Naive thymus-derived CD8-positive, alpha-beta T cell (primary cell): ENCODE measurements at regions of chr6 and their contacts with region 1.

Region 1: DNA sequence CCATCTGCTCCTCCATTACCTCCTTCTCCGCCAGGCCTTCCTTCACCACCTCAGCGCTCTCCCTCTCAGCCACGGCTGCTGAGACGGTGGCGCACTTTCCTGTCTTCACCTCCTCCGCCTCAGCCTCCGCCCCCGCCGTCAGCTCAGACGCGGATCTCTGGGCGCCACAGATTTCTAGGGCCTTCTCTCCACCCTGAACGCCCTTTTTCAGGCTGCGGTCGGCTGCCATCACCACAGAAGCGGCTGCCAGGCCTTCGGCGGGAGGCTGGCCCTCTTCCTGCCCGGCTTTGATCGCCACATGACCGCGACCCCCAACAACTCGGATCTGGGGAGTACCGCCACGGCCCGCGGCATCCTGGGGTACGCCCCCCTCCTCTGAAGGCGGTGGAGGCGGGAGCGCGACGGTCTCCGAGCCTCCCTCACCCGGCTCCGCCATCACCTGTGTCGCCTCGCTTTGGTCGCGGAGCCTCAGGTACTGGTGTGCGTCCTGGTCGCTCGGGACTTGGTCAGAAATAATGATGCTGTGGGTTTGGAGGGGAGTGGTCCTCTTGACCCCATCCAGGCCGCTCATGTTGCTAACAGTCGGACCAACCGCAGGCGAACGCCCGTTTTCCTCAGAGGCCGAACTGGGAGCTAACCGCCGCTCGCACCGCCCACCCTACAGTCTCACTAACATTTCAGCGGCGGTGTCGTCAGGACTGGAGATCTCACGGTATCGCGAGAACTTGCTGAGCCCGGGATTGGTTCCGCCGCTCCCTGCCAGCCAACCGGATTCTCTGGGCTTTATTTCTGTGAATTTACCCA is at the start of gene TSPYL1:
- DNase-seq: peak; percentile 84 to 98 (median 96)
- ATAC-seq: peak; percentile 84 to 85
- H3K4me3 Mint-ChIP-seq: peak within 1 kb of the TSS; percentile 89 to 100 (median 97)
- H3K27ac Mint-ChIP-seq: peak within 1 kb of the TSS; percentile 98 to 100 (median 100)
- H3K4me1 Mint-ChIP-seq: peaks cover 26 to 74% (median 63%) of the 10 kb centered on the region in 4 donors
- H3K27me3 Mint-ChIP-seq: no peaks in the 10 kb centered on the region
- polyA plus RNA-seq, gene TSPYL1: 28.2 to 49.1 (median 36.7) TPM

Region 2: GRCh38 chr6:116100419-116101301 is 178.8 kb before region 1 on chr6 and contains the start of gene NT5DC1:
- POLR2A ChIA-PET with region 1: interaction called, 24 read pairs
- DNase-seq: peak; percentile 73 to 89 (median 82)
- ATAC-seq: peak; percentile 90
- H3K4me3 Mint-ChIP-seq: peak within 1 kb of the TSS; percentile 90 to 99 (median 96)
- H3K27ac Mint-ChIP-seq: peak within 1 kb of the TSS; percentile 87 to 96 (median 94)
- H3K4me1 Mint-ChIP-seq: peaks cover 22 to 63% (median 55%) of the 10 kb centered on the region in 4 donors
- H3K27me3 Mint-ChIP-seq: no peaks in the 10 kb centered on the region
- polyA plus RNA-seq, gene NT5DC1: 61.2 to 84.2 (median 67.2) TPM

Region 3: GRCh38 chr6:116253505-116254296 is 25.8 kb before region 1 on chr6 and contains the start of gene TSPYL4:
- POLR2A ChIA-PET with region 1: interaction called, 70 read pairs
- DNase-seq: peak; percentile 83 to 97 (median 93)
- ATAC-seq: peak; percentile 92 to 93
- H3K4me3 Mint-ChIP-seq: no peak within 1 kb of the TSS
- H3K27ac Mint-ChIP-seq: no peak within 1 kb of the TSS
- H3K4me1 Mint-ChIP-seq: peaks cover 4 to 18% (median 8%) of the 10 kb centered on the region in 4 donors
- H3K27me3 Mint-ChIP-seq: no peaks in the 10 kb centered on the region
- polyA plus RNA-seq, gene TSPYL4: 12.5 to 19.4 (median 12.7) TPM

Region 4: DNA sequence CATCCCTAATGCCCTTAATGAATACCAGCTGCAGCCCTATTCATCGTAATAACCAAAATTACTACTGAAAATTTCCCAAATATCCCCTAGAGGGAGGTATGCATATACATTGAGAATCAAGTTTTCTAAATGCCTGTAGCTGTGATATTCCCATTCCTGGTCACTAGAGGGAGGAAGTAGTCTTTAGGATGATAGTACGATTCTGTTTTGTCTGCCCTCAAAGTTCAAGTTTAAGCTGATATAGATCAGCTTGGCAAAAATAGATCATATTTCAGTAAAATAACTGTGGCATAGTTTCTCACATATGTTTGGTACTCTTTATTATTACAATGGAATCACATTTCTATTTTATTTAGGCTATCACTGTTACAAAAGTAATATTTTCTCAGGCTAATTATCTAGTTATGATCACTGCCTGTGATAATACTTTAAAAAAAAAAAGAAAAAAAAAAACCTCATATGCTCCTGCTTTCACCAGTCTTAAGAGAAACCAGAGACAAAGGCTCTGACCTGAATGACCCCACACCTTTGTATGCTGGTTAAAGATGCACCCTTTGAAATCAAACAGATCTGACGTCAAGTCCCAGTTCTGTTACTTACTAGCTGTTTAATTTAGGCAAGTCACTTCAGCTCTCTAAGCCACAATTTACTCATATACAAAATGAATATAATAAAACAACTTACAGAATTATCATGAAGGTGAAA is 10.7 kb before region 1 on chr6:
- POLR2A ChIA-PET with region 1: interaction called, 24 read pairs
- DNase-seq: peak in 1 of 10 donors; percentile 38
- ATAC-seq: peak; percentile 77 to 82
- H3K4me3 Mint-ChIP-seq: no peak overlapping the region
- H3K27ac Mint-ChIP-seq: peak overlapping the region in 7 of 10 donors; percentile 7 to 73 (median 31)
- H3K4me1 Mint-ChIP-seq: peaks cover 20 to 56% (median 38%) of the 10 kb centered on the region in 4 donors
- H3K27me3 Mint-ChIP-seq: no peaks in the 10 kb centered on the region

Region 5: GRCh38 chr6:116461932-116462885 is 182.7 kb after region 1 on chr6:
- POLR2A ChIA-PET with region 1: interaction called, 11 read pairs
- DNase-seq: peak; percentile 22 to 70 (median 46)
- ATAC-seq: peak; percentile 93
- H3K4me3 Mint-ChIP-seq: peak overlapping the region; percentile 67 to 88 (median 82)
- H3K27ac Mint-ChIP-seq: peak overlapping the region in 6 of 10 donors; percentile 10 to 87 (median 60)
- H3K4me1 Mint-ChIP-seq: peaks cover 4 to 50% (median 13%) of the 10 kb centered on the region in 4 donors
- H3K27me3 Mint-ChIP-seq: peaks cover 9 to 36% (median 16%) of the 10 kb centered on the region in 5 donors

Region 6: GRCh38 chr6:116570856-116571682 is 291.6 kb after region 1 on chr6 and contains the start of gene RWDD1:
- POLR2A ChIA-PET with region 1: interaction called, 66 read pairs
- DNase-seq: peak; percentile 92 to 99 (median 98)
- ATAC-seq: peak; percentile 87 to 93
- H3K4me3 Mint-ChIP-seq: peak within 1 kb of the TSS; percentile 93 to 99 (median 96)
- H3K27ac Mint-ChIP-seq: peak within 1 kb of the TSS; percentile 98 to 100 (median 100)
- H3K4me1 Mint-ChIP-seq: peaks cover 26 to 60% (median 50%) of the 10 kb centered on the region in 4 donors
- H3K27me3 Mint-ChIP-seq: no peaks in the 10 kb centered on the region
- polyA plus RNA-seq, gene RWDD1: 55.7 to 89.3 (median 69.7) TPM